Astrocyte of the cerebellum (primary cell): ENCODE measurements at regions of chrX and their contacts with region 1.

Region 1: DNA sequence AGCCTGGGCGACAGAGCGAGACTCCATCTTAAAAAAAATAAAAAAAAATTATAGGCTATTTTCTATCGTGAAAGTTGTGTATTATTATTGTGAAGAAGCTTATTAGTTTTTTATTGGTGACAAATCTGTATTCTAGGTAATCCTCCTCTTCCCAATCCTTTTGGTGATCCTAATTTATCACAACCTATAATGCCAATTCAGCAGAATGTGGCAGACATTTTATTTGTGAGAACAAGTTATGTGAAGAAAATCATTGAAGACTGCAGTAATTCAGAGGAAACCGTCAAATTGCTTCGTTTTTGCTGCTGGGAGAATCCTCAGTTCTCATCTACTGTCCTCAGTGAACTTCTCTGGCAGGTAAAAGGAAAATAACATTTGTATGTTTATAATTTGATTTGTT is 109.4 kb upstream of the DDX3X start:
- DNase-seq: no peak
- H3K4me3 ChIP-seq: no peak overlapping the region
- CTCF ChIP-seq: no peak

Region 2: GRCh38 chrX:41180194-41180908 is 44.3 kb before region 1 on chrX:
- in situ Hi-C with region 1: loop called (anchors 5 kb)
- DNase-seq: peak; percentile 55
- H3K4me3 ChIP-seq: no peak overlapping the region
- CTCF ChIP-seq: peak; percentile 86